ENCODE measurements at regions of chrX and their contacts with region 1.

Region 1: DNA sequence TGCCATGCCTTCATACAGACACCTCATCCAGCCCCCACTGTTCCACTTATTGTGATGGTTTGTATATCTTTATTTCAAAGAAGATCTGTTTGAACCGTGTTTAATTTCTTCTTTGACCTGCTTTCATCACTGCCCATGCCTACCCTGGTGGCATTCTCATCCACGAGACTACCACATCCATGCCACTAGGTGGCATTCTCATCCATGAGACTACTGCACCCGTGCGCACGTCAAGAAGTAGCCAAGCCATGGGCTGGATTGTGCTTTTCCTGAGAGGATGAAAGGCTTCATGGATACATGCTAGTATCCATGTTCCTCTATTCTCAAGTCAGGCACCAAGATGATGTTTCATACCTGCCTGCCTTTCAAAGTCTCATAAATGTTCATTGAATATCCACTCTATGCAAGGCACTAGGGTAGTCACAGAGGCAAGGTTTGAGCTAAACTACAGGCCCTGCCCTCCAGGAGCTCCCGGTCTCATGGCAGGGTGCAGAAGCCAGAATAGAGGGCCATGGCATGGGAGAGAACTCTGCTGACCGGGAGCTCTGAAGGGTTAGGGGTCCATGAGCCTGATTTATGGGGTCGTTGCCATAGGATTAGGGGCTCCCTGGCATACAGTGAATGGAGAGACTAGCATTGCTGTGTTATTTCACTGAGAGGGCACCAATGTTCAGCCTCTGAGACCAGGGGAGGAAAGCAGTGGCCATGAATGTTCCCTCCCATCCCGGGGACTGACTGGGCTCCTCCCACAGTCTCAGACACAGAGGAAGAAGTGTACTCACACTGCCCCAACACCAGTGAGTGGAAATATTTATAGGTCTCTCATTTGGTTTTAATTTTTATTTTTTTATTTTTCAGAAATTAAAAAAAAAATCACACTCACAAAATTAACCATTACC is 24.8 kb upstream of the EOLA2 start:
- DNase-seq: peak; percentile 2 to 37
- ATAC-seq: peak; percentile 63 to 97
- H3K4me3 ChIP-seq: no peak overlapping the region
- H3K27ac ChIP-seq: no peak overlapping the region
- H3K4me1 ChIP-seq: peaks cover 0 to 5% of the 10 kb centered on the region in 2 donors
- H3K27me3 ChIP-seq: no peaks in the 10 kb centered on the region
- CTCF ChIP-seq: peak in 4 of 5 experiments; percentile 35 to 58 (median 54)
- POLR2A ChIP-seq: no peak

Region 2: DNA sequence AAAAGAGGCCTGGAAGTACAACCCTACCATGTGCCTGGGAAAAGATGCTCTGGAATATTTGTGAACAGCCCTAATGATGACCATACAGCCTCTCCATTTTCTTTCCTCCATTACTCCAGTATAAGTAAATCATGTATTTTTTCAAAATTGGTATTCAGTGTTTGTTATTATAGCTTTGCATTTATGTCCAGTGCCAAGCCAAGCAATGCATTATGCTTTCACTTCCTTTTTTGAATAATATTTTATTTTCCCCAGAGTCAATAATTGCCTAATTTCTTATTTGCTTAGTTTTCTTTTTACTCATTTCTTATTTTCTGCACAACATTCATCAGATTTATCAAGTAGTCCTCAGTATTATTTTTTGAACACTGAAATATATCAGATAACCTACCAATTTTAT is 24.5 kb after region 1 on chrX:
- in situ Hi-C with region 1: no loop called
- intact Hi-C with region 1: no loop called
- DNase-seq: no peak
- ATAC-seq: no peak
- H3K4me3 ChIP-seq: no peak overlapping the region
- H3K27ac ChIP-seq: no peak overlapping the region
- H3K4me1 ChIP-seq: no peaks in the 10 kb centered on the region
- H3K27me3 ChIP-seq: no peaks in the 10 kb centered on the region
- CTCF ChIP-seq: no peak
- POLR2A ChIP-seq: no peak

Region 3: GRCh38 chrX:150084496-150085229 is 121.6 kb after region 1 on chrX:
- in situ Hi-C with region 1: no loop called
- intact Hi-C with region 1: loop called (anchors 10 kb)
- DNase-seq: no peak
- ATAC-seq: no peak
- H3K4me3 ChIP-seq: no peak overlapping the region
- H3K27ac ChIP-seq: no peak overlapping the region
- H3K4me1 ChIP-seq: no peaks in the 10 kb centered on the region
- H3K27me3 ChIP-seq: no peaks in the 10 kb centered on the region
- CTCF ChIP-seq: no peak
- POLR2A ChIP-seq: no peak

Region 4: GRCh38 chrX:150219374-150220185 is 256.5 kb after region 1 on chrX:
- in situ Hi-C with region 1: loop called in 1 of 4 experiments (anchors 25 kb)
- intact Hi-C with region 1: loop called (anchors 10 kb)
- DNase-seq: no peak
- ATAC-seq: no peak
- H3K4me3 ChIP-seq: no peak overlapping the region
- H3K27ac ChIP-seq: no peak overlapping the region
- H3K4me1 ChIP-seq: no peaks in the 10 kb centered on the region
- H3K27me3 ChIP-seq: no peaks in the 10 kb centered on the region
- CTCF ChIP-seq: no peak
- POLR2A ChIP-seq: no peak

Region 5: DNA sequence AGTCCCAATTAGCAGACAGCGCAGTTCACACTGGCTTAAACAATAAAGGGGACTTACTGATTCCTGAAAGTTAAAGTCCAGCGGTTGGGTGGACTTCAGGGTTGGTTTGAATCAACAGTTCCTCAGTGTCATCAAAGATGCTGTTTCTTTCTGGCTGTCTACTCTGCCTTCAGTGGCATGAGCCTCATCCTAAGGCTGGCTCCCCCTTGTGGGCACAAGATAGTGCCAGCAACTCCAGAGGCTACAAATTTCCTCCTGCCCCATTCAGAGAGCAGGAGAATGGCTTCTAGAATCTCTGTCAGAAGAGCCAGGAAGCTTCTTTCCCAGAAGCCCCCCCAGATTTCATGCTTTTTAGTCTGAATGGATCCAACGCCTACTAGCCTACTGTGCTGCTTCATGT is 522.9 kb after region 1 on chrX:
- in situ Hi-C with region 1: loop called in 3 of 4 experiments (anchors 25 kb)
- intact Hi-C with region 1: loop called (anchors 2 kb)
- DNase-seq: peak in 1 of 2 donors; percentile 46
- ATAC-seq: peak; percentile 79 to 88
- H3K4me3 ChIP-seq: no peak overlapping the region
- H3K27ac ChIP-seq: no peak overlapping the region
- H3K4me1 ChIP-seq: no peaks in the 10 kb centered on the region
- H3K27me3 ChIP-seq: no peaks in the 10 kb centered on the region
- CTCF ChIP-seq: peak; percentile 27 to 61 (median 47)
- POLR2A ChIP-seq: no peak

Region 6: DNA sequence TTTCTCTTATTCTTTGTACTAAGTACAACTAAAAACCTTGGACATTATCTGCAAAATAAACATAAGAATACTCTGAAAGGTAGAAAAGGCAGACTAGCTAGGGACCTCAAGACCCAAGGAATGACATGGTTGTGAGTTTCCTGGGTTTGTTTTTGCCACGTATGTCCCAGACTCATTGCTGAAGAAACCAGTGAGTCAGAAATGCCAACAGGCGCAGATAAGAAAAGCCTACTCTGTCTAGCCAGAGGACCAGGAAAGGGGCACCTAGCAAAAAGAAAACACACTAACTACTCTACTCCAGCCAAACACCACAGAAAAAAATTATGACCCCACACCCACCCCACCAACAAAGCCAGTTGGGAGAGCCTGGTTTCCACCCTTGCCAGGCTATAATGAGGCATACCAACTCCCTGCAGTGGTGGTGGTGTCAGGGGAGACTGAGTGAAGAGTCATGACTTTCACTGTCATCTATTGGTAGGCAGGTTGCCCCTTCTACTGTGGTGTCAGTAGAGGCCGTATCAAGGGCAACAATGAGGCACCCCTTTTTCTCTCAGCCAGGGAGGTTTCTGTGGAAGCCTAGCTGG is 741.0 kb after region 1 on chrX:
- in situ Hi-C with region 1: loop called in 3 of 4 experiments (anchors 25 kb)
- intact Hi-C with region 1: no loop called
- DNase-seq: no peak
- ATAC-seq: no peak
- H3K4me3 ChIP-seq: no peak overlapping the region
- H3K27ac ChIP-seq: no peak overlapping the region
- H3K4me1 ChIP-seq: peaks cover 0 to 11% of the 10 kb centered on the region in 2 donors
- H3K27me3 ChIP-seq: no peaks in the 10 kb centered on the region
- CTCF ChIP-seq: no peak
- POLR2A ChIP-seq: no peak

Measured in gastrocnemius medialis (tissue), 4 donors.